ENCODE measurements at regions of chr20 and their contacts with region 1.

Region 1: GRCh38 chr20:23937303-23938117 is 51.1 kb downstream of the GGTLC1 start:
- DNase-seq: peak; percentile 90
- H3K4me3 Mint-ChIP-seq: no peak overlapping the region
- H3K27ac Mint-ChIP-seq: no peak overlapping the region
- H3K4me1 Mint-ChIP-seq: peaks cover 1% of the 10 kb centered on the region
- H3K27me3 Mint-ChIP-seq: peaks cover 4% of the 10 kb centered on the region

Region 2: GRCh38 chr20:24079661-24080412 is 142.3 kb after region 1 on chr20:
- intact Hi-C with region 1: no loop called
- DNase-seq: no peak
- H3K4me3 Mint-ChIP-seq: no peak overlapping the region
- H3K27ac Mint-ChIP-seq: no peak overlapping the region
- H3K4me1 Mint-ChIP-seq: no peaks in the 10 kb centered on the region
- H3K27me3 Mint-ChIP-seq: peaks cover 2% of the 10 kb centered on the region

Region 3: DNA sequence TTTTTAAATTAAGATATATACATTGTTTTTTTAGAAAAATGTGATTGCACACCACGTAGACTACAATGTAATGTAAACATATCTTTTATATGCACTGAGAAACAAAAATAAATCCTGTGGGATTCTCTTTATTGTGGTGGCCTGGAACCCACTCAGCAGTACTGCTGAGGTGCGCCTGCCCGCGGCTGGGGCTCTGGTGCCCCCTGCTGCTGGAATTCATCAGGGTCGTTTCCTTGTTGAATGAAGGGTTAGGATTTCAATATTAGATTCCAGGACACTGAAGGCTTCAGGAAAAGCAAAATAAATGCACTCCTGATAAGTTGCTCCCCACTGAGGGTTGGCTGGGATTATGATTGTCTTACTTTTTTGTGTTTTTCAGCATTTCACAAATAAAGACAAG is 226.8 kb after region 1 on chr20:
- intact Hi-C with region 1: loop called (anchors 1 kb)
- DNase-seq: peak; percentile 76
- H3K4me3 Mint-ChIP-seq: no peak overlapping the region
- H3K27ac Mint-ChIP-seq: no peak overlapping the region
- H3K4me1 Mint-ChIP-seq: no peaks in the 10 kb centered on the region
- H3K27me3 Mint-ChIP-seq: peaks cover 3% of the 10 kb centered on the region

Region 4: DNA sequence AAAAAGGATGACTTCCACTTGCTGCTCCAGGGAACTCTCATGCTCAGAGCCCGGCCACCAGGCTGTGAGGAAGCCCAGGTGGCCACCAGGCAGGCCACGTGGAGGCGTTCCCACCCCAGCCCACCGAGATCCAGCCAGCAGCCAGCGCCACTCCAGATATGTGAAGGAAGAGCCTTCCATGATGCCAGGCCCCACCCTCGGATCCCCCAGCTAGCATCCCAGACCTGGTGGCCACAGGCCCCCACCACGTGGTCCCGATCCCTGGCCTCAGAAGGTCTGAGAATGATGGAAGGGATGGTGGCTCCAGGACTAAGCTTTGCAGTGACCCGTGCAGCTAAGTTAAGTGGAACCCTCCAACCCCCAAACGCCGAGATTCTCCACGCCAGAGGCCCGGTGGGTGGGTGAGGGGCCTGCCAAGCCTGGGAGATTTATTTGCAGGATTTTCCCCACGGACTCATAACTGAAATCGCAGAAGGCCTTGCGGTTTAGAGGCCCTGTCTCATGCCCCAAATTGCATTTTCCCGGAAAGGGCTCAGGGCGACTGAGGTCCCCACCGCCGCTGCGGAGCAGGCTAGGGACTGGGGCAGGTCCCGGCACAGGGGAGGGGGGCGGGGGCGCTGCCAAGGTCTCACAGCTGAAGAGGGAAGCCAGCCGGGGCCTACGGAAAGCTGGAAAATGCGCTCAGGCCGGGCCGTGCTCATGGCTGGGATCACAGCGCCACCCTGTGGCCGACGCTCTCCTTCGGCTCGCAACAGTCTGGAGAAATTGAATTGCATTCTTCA is 980.5 kb after region 1 on chr20:
- intact Hi-C with region 1: loop called (anchors 2 kb)
- DNase-seq: peak; percentile 85
- H3K4me3 Mint-ChIP-seq: no peak overlapping the region
- H3K27ac Mint-ChIP-seq: peak overlapping the region; percentile 22
- H3K4me1 Mint-ChIP-seq: peaks cover 7% of the 10 kb centered on the region
- H3K27me3 Mint-ChIP-seq: peaks cover 4% of the 10 kb centered on the region

Measured in activated CD4-positive, alpha-beta T cell treated with anti-CD3 and anti-CD28 coated beads, Interleukin-2, amount 10 ng/mL, durations not matched to agents 24 days and 14 days (primary cell).